Activated B cell treated with CpG ODN at 0.5 μM for 24 hours (primary cell): ENCODE measurements at regions of chr9 and their contacts with region 1.

Region 1: DNA sequence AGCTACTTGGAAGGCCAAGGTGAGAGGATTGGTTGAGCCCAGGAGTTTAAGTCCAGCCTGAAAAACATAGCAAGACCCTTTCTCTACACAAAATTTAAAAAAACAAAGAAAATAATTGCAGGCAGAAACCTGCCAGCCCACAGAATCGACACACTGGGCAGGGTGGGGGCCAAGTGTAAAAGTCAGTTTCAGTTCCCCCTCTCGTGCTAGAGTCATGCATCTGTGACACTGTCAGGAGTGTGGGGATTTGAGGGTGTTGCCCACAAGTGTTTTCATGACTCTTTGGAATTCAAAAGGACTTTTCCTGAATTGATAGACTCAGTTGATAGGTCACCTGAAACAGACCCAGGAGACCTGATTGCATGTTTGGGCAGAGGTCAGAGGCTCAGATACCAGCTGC is 47.6 kb downstream of the PRRC2B start:
- DNase-seq: peak; percentile 37
- ATAC-seq: peak; percentile 99
- H3K4me3 Mint-ChIP-seq: peak overlapping the region; percentile 46
- H3K27ac Mint-ChIP-seq: peak overlapping the region; percentile 86
- H3K4me1 Mint-ChIP-seq: peaks cover 31% of the 10 kb centered on the region
- H3K27me3 Mint-ChIP-seq: no peaks in the 10 kb centered on the region
- CTCF ChIP-seq: no peak

Region 2: DNA sequence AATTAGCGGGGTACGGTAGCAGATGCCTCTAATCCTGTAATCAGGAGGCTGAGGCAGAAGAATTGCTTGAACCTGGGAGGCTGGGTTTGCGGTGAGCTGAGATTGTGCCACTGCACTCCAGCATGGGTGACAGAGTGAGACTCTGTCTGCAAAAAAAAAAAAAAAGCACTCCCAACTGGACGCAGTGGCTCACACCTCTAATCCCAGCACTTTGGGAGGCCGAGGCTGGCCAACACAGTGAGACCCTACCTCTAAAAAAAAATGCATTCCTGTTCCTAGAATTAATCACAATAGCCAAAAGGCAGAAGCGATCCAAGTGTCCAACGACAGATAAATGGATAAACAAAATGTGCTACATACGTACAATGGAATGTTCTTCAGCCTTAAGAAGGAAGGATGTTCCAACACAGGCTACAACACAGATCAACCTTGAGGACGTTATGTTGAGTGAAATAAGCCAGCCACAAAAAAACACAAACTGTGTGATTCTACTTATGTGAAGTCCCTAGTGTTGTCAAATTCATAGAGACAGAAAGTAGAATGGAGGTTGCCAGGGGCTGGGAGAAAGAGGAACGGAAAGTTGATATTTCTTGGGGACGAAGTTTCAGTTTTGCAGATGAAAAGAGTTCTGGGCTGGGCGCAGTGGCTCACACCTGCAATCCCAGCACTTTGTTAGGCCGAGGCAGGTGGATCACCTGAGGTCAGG is 179.0 kb before region 1 on chr9:
- CTCF ChIA-PET with region 1: no interaction called
- POLR2A ChIA-PET with region 1: interaction called, 14 read pairs
- intact Hi-C with region 1: no loop called
- DNase-seq: no peak
- ATAC-seq: peak; percentile 73
- H3K4me3 Mint-ChIP-seq: peak overlapping the region; percentile 58
- H3K27ac Mint-ChIP-seq: peak overlapping the region; percentile 91
- H3K4me1 Mint-ChIP-seq: peaks cover 55% of the 10 kb centered on the region
- H3K27me3 Mint-ChIP-seq: no peaks in the 10 kb centered on the region
- CTCF ChIP-seq: no peak

Region 3: DNA sequence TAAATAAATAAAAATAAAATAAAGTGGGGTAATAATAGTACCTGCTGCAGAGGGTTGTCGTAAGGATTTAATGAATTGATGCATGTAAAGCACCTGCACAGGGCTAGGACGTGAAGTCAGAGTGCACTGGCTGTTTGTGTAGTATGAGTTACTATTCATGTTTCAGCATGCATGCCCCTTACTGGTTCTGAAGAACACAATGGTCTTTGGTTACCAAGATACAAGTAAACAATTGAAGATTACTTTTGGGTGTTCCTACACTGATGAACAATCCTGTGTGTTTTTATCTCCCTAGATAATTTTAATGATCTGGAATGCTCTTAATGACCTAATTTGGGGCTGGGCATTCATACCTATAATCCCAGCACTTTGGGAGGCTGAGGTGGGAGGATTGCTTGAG is 70.8 kb before region 1 on chr9:
- CTCF ChIA-PET with region 1: no interaction called
- POLR2A ChIA-PET with region 1: interaction called, 15 read pairs
- intact Hi-C with region 1: loop called (anchors 5 kb)
- DNase-seq: no peak
- ATAC-seq: no peak
- H3K4me3 Mint-ChIP-seq: no peak overlapping the region
- H3K27ac Mint-ChIP-seq: no peak overlapping the region
- H3K4me1 Mint-ChIP-seq: peaks cover 22% of the 10 kb centered on the region
- H3K27me3 Mint-ChIP-seq: no peaks in the 10 kb centered on the region
- CTCF ChIP-seq: no peak

Region 4: DNA sequence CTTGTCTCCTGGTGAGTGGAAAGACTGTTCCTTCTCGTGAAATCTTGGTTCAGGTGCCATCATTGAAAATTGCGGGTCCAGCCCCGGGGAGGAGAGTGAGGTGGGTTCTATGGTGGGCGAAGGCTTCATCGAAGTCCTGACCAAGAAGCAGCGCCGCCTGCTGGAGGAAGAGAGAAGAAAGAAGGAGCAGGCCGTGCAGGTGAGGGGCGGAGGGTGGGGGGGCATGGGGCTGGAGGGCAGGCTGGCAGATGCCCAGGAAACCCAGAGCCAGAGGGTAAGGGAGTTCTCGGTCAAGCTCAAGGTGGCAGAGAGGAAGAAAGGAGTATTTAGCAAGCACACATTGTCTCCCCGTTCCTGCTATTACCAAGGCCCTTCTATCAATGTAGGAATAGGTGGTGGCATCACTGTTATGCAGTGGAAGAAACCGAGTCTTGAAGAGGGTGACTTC is 37.0 kb after region 1 on chr9:
- CTCF ChIA-PET with region 1: no interaction called
- POLR2A ChIA-PET with region 1: no interaction called
- intact Hi-C with region 1: loop called (anchors 5 kb)
- DNase-seq: peak; percentile 56
- ATAC-seq: peak; percentile 57
- H3K4me3 Mint-ChIP-seq: no peak overlapping the region
- H3K27ac Mint-ChIP-seq: peak overlapping the region; percentile 18
- H3K4me1 Mint-ChIP-seq: no peaks in the 10 kb centered on the region
- H3K27me3 Mint-ChIP-seq: no peaks in the 10 kb centered on the region
- CTCF ChIP-seq: no peak